Activated T-helper 2 cell treated with anti-CD3 and anti-CD28 coated beads, Interferon-gamma antibody, Interleukin-2, Interleukin-4, amounts not matched to agents 10 μg/mL and 5 μg/mL and 100 μg/mL, durations not matched to agents 14 hours and 24 hours and 36 hours (primary cell): ENCODE measurements at regions of chr7 and their contacts with region 1.

Region 1: DNA sequence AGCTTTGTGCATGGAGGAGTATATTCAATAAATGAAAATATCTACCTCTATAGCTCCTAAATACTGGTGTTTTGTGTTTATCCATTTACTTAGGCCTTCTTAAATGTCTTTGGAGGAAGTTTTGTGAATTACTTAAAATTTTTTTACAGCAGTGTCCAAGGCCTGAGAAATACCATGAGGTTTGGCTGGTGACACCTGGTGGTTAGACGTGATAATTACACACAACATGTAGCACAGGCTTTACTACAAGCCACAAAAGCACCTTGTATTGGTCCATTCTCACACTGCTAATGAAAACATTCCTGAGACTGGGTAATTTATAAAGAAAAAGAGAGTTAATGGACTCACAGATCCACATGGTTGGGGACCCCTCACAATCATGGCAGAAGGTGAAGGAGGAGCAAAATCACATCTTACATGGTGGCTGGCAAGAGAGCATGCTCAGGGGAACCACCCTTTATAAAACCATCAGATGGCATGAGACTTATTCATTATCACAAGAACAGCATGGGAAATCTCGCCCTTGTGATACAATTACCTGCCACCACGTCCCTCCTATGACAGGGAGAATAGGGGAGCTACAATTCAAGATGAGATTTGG is 20.6 kb downstream of the HYAL4 start:
- DNase-seq: no peak
- H3K4me3 Mint-ChIP-seq: no peak overlapping the region
- H3K27ac Mint-ChIP-seq: no peak overlapping the region
- H3K4me1 Mint-ChIP-seq: no peaks in the 10 kb centered on the region
- H3K27me3 Mint-ChIP-seq: peaks cover 4% of the 10 kb centered on the region

Region 2: DNA sequence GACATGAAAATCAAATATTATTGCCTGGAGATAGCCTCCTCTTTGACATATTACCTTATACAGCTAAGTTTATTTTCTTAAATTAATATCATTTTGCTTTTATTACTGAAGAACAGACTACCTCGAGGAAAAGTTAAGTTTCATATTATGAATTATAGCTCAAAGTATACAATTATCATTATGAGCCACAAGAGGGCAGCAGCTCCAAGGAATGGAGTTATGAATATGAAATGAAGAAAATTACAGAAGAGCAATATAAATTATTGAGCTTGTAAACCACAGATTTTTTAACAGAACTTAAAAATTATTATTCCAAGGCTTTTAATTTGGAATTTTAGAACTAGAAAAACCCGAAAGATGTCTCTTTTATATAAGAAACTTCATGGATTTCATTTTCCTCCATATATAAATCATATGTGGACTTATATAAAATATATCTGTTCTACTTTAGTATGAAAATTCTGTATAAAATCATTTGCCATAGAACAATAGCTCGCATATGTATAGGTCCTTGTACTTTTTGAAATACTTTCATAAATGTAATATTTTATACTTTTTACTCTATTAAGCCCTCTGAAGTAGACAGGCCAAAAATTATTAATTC is 371.3 kb before region 1 on chr7:
- intact Hi-C with region 1: loop called (anchors 5 kb)
- DNase-seq: no peak
- H3K4me3 Mint-ChIP-seq: no peak overlapping the region
- H3K27ac Mint-ChIP-seq: no peak overlapping the region
- H3K4me1 Mint-ChIP-seq: no peaks in the 10 kb centered on the region
- H3K27me3 Mint-ChIP-seq: peaks cover 1% of the 10 kb centered on the region

Region 3: DNA sequence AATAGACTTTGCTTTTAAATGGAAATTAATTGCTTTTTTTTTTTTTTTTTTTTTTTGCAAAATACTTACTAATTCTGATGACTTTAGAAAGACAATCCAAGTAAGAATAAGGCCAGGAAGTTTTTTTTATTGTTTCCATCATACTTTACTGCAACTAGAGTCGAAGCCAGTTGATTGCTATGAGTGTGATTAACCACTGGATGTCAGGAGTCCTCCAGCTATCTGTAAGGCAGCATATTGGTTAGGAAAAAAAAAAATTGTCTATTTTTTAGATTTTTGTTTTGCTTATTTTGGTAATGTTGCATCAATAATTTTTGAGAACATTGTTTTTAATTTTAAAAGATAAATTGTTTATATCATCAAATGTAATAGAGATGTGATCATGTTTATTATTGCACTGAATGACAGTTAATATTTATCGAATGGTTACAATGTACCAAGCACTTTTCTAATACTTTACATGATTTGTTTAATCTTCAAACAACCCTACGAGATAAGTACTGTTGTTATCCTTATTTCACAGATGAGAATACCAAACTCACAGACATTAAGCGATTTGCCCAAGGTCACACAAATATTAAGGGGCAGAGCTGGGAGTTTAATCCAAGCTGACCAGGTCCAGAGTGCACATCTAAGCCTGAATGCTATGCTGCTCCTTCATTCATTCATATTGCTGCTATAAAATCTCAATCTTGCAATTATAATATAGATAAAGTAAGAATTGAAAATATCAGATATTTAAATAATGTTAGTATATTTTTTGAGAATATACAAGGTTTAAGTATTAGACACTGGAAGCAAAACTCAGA is 229.9 kb before region 1 on chr7:
- intact Hi-C with region 1: loop called (anchors 5 kb)
- DNase-seq: no peak
- H3K4me3 Mint-ChIP-seq: no peak overlapping the region
- H3K27ac Mint-ChIP-seq: no peak overlapping the region
- H3K4me1 Mint-ChIP-seq: no peaks in the 10 kb centered on the region
- H3K27me3 Mint-ChIP-seq: peaks cover 10% of the 10 kb centered on the region

Region 4: DNA sequence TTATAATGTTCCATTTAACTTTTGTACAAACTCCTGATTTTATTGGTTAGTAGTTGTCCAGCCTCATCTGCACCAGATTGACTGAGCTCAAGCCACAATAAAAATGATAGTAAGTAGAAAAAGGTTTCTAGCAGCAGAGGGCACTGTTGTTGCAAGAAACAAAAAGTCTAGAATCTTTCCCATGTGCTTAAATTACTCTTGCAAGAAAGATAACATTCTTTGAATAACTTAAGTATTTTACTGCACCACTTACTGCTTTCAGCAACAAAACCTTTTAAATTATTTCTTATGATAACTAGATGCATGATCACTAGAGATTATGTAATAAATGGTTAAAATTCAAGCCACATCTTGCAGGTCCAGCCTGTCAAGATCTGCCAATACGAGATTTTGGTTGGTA is 182.9 kb before region 1 on chr7:
- intact Hi-C with region 1: loop called (anchors 1 kb)
- DNase-seq: no peak
- H3K4me3 Mint-ChIP-seq: no peak overlapping the region
- H3K27ac Mint-ChIP-seq: no peak overlapping the region
- H3K4me1 Mint-ChIP-seq: no peaks in the 10 kb centered on the region
- H3K27me3 Mint-ChIP-seq: no peaks in the 10 kb centered on the region

Region 5: GRCh38 chr7:123797673-123798527 is 67.7 kb before region 1 on chr7:
- intact Hi-C with region 1: loop called (anchors 1 kb)
- DNase-seq: no peak
- H3K4me3 Mint-ChIP-seq: no peak overlapping the region
- H3K27ac Mint-ChIP-seq: no peak overlapping the region
- H3K4me1 Mint-ChIP-seq: no peaks in the 10 kb centered on the region
- H3K27me3 Mint-ChIP-seq: no peaks in the 10 kb centered on the region